Lower lobe of right lung (tissue), 2 donors: ENCODE measurements at regions of chr6 and their contacts with region 1.

Region 1: GRCh38 chr6:33014841-33015634 is 5.6 kb upstream of the HLA-DOA start:
- DNase-seq: no peak
- ATAC-seq: peak; percentile 50 to 65
- H3K4me3 ChIP-seq: peak overlapping the region; percentile 6
- H3K27ac ChIP-seq: peak overlapping the region; percentile 12
- H3K4me1 ChIP-seq: peaks cover 41% of the 10 kb centered on the region
- H3K27me3 ChIP-seq: no peaks in the 10 kb centered on the region
- CTCF ChIP-seq: peak; percentile 87

Region 2: DNA sequence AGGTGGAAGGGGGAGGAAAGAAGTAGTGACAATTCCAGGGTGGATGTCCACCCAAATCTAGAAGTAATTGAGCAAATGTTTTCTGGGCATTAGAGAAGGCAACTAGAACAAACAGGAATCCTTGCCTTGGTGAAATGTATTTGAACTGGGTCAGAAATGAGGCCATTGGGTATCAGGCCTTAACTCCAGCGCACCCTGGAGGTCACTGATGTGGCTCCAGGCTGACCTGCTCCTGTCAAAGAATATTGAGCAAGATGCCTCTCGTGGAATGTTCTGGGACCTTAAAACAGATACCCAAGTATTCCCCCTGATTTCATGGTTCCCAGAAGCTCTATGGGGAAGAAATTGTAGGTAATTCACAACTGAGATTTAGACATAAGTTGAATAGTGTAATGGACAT is 67.7 kb after region 1 on chr6:
- intact Hi-C with region 1: loop called (anchors 10 kb)
- DNase-seq: peak; percentile 59
- ATAC-seq: peak; percentile 65 to 66
- H3K4me3 ChIP-seq: no peak overlapping the region
- H3K27ac ChIP-seq: peak overlapping the region; percentile 39
- H3K4me1 ChIP-seq: peaks cover 37% of the 10 kb centered on the region
- H3K27me3 ChIP-seq: no peaks in the 10 kb centered on the region
- CTCF ChIP-seq: peak; percentile 49